ENCODE measurements at regions of chr3 and their contacts with region 1.

Region 1: DNA sequence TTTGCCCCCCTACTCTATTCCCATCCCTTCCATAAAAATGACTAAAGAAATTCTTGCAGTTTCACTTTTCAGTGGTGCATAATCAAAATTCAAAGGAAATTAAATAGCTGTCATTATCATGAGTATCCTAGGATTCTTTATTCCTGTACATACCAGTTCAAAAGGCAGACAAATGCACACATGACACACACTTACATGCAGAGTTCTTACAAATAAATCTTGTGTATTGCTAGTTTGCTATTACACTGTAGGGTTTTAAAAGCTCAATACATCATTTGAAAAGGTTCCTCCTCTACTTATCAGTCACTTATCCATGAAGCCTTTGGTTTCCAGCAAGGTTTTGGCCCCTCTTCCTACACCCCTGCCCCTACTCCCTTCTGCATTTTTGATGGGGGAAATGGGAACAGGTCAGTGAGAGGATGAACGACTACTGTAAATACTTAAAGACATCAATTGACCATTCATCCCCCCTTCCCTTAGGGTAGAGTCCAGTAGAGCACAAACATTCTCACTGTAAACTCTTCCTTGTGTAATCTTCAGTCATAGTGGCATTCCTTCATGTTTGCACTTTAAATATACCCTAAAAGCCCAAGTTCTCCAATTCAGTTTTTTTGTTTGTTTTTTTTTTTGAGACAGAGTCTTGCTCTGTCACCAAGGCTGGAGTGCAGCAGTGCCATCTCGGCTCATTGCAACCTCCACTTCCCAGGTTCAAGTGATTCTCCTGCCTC is 92.6 kb downstream of the SUCLG2 start:
- DNase-seq: no peak
- ATAC-seq: no peak
- H3K4me3 Mint-ChIP-seq: no peak overlapping the region
- H3K27ac Mint-ChIP-seq: no peak overlapping the region
- H3K4me1 Mint-ChIP-seq: peaks cover 6% of the 10 kb centered on the region
- H3K27me3 Mint-ChIP-seq: no peaks in the 10 kb centered on the region
- CTCF ChIP-seq: no peak

Region 2: GRCh38 chr3:67531250-67532106 is 30.4 kb before region 1 on chr3:
- CTCF ChIA-PET with region 1: no interaction called
- POLR2A ChIA-PET with region 1: no interaction called
- intact Hi-C with region 1: loop called (anchors 2 kb)
- DNase-seq: no peak
- ATAC-seq: no peak
- H3K4me3 Mint-ChIP-seq: no peak overlapping the region
- H3K27ac Mint-ChIP-seq: no peak overlapping the region
- H3K4me1 Mint-ChIP-seq: peaks cover 12% of the 10 kb centered on the region
- H3K27me3 Mint-ChIP-seq: no peaks in the 10 kb centered on the region
- CTCF ChIP-seq: no peak

Region 3: DNA sequence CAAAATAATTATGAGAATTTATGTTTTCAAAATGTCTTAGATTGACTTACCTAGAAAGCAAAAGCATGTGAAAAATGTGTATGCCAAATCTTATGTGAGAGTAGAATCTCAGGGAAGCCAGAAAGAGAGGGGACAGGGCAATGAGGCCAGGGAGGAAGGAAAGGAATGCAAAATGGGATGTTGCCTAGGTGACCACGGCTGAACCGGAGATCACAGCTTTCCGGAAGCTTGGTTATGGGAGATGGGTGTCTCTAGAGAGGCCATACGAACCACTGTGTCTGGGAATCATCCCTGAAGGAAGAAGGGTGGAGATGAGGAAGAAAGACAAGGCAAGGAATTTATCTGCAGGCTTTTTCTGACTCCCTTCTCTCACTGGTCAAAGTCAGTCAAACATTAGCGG is 16.6 kb after region 1 on chr3:
- CTCF ChIA-PET with region 1: no interaction called
- POLR2A ChIA-PET with region 1: no interaction called
- intact Hi-C with region 1: loop called (anchors 1 kb)
- DNase-seq: no peak
- ATAC-seq: no peak
- H3K4me3 Mint-ChIP-seq: no peak overlapping the region
- H3K27ac Mint-ChIP-seq: no peak overlapping the region
- H3K4me1 Mint-ChIP-seq: peaks cover 5% of the 10 kb centered on the region
- H3K27me3 Mint-ChIP-seq: no peaks in the 10 kb centered on the region
- CTCF ChIP-seq: no peak